Cardiac septum (tissue), 1 donor: ENCODE measurements at regions of chr2 and their contacts with region 1.

Region 1: DNA sequence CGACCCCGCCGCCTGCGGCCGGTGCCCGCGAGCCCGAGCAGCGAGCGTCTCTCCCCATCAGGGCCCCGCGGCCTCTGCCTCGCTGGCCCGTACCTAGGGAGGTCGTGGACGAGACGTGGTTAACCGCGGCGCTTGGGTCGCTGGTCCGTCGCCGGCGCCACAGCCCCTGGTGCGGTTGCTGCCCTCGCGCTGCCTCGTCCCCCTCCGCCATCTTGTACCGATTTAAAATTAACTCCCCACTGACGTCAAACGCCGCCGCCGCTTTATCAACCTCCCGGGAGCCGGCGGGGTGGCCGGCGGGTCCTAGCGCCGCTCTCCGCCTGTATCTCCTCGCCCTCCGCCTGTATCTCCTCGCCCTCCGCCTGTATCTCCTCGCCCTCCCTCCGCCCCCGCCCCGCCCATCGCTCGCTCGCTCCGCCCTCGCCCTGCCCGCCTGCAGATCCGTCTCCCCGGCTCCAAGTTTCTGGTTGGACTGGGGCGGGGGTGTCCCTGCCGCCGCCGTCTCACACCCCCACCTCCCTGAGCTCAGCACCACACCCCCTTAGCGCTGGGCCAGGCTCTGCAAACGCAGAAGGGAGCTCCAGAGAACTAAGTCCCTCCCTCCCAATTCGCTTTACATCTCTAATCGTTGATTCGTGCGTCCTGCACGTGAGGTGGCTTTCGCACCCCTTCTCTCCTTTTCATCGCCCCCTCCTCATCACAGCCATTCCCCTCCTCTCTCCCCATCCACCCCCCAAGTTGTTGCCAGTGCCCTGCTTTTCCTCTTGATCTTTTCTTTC is at the start of gene ATL2:
- DNase-seq: peak; percentile 99
- total RNA-seq, gene ATL2: 27.1 TPM

Region 2: DNA sequence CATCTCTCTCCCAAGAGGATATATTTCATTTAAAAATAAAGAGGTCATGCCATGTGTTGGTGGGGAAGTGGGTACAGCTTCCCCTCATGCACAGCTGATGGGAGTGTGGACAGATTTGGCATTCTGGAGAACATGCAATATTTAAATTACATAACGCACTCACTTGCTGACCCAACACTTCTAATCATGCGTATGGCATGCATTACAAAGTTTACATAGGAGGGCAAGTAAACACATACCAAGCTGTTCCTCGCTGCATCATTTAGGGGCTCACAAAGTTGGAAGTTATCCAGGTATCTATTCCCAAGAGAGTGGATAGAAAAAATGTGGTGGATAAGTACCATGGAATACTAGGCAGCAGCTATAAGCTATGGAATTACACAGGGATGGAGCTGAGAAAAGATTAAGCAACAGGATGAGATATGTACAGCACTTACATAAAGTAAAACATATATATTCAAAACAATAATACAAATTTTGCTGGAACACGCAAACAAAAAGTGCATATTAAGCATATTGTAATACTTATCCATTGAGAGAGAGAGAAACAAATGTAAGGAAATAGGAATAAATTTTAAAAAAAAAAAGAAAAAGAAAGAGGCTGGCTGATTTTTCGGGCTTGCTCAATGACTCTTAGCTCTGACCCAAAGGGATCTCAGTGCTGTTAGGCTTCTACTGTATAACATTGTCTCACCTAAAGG is 312.3 kb before region 1 on chr2:
- intact Hi-C with region 1: no loop called
- DNase-seq: no peak

Region 3: GRCh38 chr2:38091760-38092159 is 285.5 kb before region 1 on chr2:
- intact Hi-C with region 1: no loop called
- DNase-seq: no peak

Region 4: DNA sequence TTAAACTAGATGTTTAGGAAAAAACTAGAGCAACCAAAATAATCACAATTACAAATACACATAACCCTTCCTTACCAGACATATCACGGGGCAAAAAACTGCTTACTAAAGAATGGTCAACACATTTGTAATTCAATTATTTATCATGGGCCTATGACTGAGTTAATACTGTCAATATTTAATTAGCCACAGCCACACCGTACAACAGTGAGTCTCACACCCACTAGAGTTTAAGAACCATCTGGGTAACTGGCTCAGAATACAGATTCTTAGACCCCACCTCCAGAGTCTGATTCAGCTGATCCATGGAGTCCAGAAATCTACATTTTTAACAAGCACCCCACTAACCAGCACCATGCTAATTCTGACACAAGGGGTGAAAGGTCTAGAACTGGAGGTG is 15.0 kb before region 1 on chr2:
- intact Hi-C with region 1: no loop called
- DNase-seq: no peak

Region 5: DNA sequence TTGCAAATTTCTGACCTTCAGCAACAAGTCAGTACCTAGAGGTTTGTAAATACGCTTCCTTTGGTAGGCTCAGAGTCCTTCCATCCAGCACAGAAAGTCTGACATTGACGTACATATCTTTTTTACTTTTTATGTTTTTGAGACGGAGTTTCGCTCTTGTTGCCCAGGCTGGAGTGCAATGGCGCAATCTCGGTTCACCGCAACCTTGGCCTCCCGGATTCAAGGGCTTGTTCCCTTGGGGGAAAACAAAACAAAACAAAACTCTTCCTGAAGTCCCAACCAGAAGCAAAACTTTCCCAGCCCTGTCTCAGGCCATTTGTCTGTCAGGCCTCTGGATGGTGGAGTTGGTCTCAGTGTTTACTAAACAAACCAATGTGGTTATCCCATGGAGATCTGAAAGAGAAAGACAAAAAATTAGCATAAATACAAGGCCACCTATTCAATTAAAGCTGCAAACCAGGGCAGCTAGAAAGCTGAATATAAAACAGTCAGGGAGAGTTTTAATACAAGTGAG is 29.4 kb after region 1 on chr2:
- intact Hi-C with region 1: loop called (anchors 1 kb)
- DNase-seq: no peak

Region 6: GRCh38 chr2:38720613-38721241 is 343.5 kb after region 1 on chr2:
- intact Hi-C with region 1: loop called (anchors 2 kb)
- DNase-seq: peak; percentile 80